ENCODE measurements at regions of chr7 and their contacts with region 1.

Region 1: GRCh38 chr7:23531794-23532489 is at the start of gene TRA2A:
- DNase-seq: peak; percentile 95
- H3K4me3 Mint-ChIP-seq: peak within 1 kb of the TSS; percentile 99
- H3K27ac Mint-ChIP-seq: peak within 1 kb of the TSS; percentile 100
- H3K4me1 Mint-ChIP-seq: peaks cover 41% of the 10 kb centered on the region
- H3K27me3 Mint-ChIP-seq: no peaks in the 10 kb centered on the region
- total RNA-seq, gene TRA2A: 98.6 and 103 TPM in 2 replicates

Region 2: DNA sequence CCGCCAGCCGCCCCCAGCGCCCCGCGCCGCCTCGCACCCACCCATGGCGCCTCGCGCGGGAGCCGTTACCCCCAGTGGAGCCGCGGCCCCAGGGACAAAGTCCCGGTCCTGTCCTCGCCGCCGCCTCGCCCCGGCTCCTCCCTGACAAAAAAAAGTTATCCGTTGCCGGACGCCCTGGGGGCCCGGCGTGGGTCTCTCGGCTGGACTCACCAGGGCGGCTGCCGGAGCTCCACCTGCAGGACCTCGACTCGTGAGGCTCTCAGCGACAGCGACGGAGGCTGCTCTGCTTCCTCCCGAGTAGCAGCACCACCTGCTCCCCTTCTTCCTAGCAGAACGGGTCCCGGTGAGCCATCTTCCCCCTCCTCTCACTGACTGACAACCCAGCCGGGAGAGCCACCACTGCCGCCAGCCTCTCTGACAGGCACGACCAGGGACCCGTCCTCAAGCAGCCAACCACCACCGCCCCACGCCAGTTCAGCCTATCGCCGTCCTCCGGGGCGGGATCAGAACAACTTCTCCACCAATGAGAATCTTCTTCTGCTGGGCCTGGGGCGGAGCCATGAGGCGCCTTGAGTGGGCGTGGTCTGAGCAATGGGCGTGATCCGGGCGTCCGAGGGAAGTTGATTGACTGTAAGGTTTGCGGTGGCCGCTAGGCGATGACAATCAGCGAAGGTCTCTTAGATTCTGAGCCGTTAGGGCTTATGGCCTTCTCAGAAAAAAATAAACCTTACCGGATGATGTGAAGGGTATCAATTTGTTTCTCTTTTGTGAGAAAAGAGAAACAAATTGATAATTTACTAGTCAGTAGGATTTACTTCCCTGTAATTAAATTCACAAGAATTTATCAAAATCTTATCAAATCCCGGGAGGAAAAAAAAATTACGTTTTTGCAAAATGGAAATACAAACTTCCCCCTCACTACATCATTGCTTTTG is 518.0 kb before region 1 on chr7 and contains the start of gene HYCC1:
- intact Hi-C with region 1: loop called (anchors 10 kb)
- DNase-seq: peak; percentile 99
- H3K4me3 Mint-ChIP-seq: peak within 1 kb of the TSS; percentile 93
- H3K27ac Mint-ChIP-seq: peak within 1 kb of the TSS; percentile 94
- H3K4me1 Mint-ChIP-seq: peaks cover 34% of the 10 kb centered on the region
- H3K27me3 Mint-ChIP-seq: no peaks in the 10 kb centered on the region
- total RNA-seq, gene HYCC1: 36.8 and 45.7 TPM in 2 replicates

Region 3: DNA sequence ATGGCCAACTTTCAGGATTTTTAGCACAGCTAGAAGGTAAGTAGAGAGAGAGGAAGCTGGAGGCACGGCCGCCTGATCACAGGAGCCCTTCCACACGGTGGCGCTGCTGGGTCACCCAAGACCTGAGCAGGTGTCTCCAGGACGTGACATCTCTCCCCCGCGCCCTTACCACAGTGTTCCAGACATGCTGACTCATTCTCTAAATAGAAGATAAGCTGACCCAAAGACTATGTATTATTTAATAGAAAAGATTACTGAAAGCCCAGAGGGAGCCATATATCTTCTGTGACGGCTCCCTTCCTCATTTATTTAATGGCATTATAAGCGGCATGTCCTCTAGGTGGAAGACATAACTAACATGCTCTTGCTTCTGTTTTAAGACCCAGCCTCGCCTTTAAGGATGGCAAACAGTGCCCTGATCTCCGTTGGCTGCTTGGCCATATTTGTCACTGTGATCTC is 258.8 kb before region 1 on chr7:
- intact Hi-C with region 1: loop called (anchors 2 kb)
- DNase-seq: peak; percentile 80
- H3K4me3 Mint-ChIP-seq: peak overlapping the region; percentile 72
- H3K27ac Mint-ChIP-seq: peak overlapping the region; percentile 5
- H3K4me1 Mint-ChIP-seq: peaks cover 24% of the 10 kb centered on the region
- H3K27me3 Mint-ChIP-seq: peaks cover 4% of the 10 kb centered on the region

Region 4: GRCh38 chr7:23373151-23374004 is 158.6 kb before region 1 on chr7:
- intact Hi-C with region 1: loop called (anchors 1 kb)
- DNase-seq: no peak
- H3K4me3 Mint-ChIP-seq: peak overlapping the region; percentile 9
- H3K27ac Mint-ChIP-seq: peak overlapping the region; percentile 94
- H3K4me1 Mint-ChIP-seq: peaks cover 49% of the 10 kb centered on the region
- H3K27me3 Mint-ChIP-seq: peaks cover 6% of the 10 kb centered on the region

Region 5: GRCh38 chr7:23490357-23491135 is 41.4 kb before region 1 on chr7:
- intact Hi-C with region 1: loop called (anchors 5 kb)
- DNase-seq: peak; percentile 38
- H3K4me3 Mint-ChIP-seq: peak overlapping the region; percentile 84
- H3K27ac Mint-ChIP-seq: peak overlapping the region; percentile 82
- H3K4me1 Mint-ChIP-seq: peaks cover 4% of the 10 kb centered on the region
- H3K27me3 Mint-ChIP-seq: no peaks in the 10 kb centered on the region

Region 6: DNA sequence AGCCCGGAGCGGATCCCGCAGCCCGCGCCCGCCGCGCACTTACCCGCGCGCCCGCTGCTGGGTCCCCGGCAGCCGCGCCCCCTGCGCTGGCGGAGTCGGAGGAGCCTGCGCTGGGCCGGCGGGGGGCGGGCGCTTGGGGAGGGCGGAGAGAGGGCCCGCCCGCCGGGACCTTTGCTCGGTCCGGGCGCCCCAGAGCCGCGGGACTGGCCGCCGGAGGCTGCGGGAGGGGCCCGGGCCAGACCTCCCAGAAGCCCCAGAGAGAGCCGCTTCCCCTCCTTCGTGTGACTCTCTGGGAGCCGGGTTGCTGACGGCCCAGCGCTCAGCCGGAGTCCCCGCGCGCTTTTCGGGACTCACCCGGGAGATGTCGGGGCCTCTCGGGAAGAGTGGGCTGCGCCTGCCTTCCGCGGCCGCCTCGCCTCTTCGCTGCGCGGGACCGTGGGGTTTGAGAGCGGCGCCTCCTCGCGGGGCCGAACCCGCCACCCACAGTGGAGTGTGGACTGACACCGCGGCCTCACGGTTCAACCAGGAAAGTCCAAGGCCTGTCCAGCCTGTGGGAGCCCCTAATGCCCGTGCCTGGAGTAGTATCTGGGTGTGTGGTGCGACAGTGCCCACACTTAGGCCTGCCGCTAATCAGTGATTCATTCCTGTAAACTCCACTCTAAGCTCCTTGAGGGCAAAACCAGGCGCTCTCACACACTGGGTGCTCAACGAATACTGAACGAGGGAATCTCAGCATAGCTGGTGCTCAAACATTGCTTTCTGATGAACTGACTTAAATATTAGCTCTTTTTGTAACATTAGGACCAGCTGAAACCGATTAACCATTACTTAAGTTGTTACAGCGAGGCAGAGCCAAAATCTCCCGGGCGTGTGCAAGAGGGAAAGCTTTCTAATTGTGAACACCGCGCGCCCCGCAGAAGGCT is 1225.7 kb after region 1 on chr7 and contains the start of gene GSDME:
- intact Hi-C with region 1: loop called (anchors 5 kb)
- DNase-seq: peak; percentile 21
- H3K4me3 Mint-ChIP-seq: peak within 1 kb of the TSS; percentile 91
- H3K27ac Mint-ChIP-seq: peak within 1 kb of the TSS; percentile 84
- H3K4me1 Mint-ChIP-seq: peaks cover 38% of the 10 kb centered on the region
- H3K27me3 Mint-ChIP-seq: peaks cover 44% of the 10 kb centered on the region
- total RNA-seq, gene GSDME: 10.6 and 11.0 TPM in 2 replicates

Measured in activated T-helper 1 cell treated with anti-CD3 and anti-CD28 coated beads, Interleukin-12 subunit alpha, Interleukin-12 subunit beta, Interleukin-2, Interleukin-4 antibody, amounts not matched to agents 30 ng/mL and 10 ng/mL and 1 ng/mL, durations not matched to agents 14 hours and 24 hours and 36 hours (primary cell).